CD4-positive, alpha-beta memory T cell (primary cell): ENCODE measurements at regions of chr1 and their contacts with region 1.

Region 1: GRCh38 chr1:26787706-26788514 is at the start of gene PIGV:
- DNase-seq: peak; percentile 87 to 92 (median 89)
- H3K4me3 ChIP-seq: peak within 1 kb of the TSS; percentile 87 to 88
- H3K4me3 Mint-ChIP-seq: peak within 1 kb of the TSS; percentile 98 to 100 (median 99)
- H3K27ac ChIP-seq: peak within 1 kb of the TSS; percentile 90
- H3K27ac Mint-ChIP-seq: peak within 1 kb of the TSS; percentile 99 to 100 (median 100)
- H3K4me1 ChIP-seq: peaks cover 79% of the 10 kb centered on the region
- H3K4me1 Mint-ChIP-seq: peaks cover 58 to 83% (median 72%) of the 10 kb centered on the region in 4 donors
- H3K27me3 ChIP-seq: no peaks in the 10 kb centered on the region
- H3K27me3 Mint-ChIP-seq: no peaks in the 10 kb centered on the region
- total RNA-seq, gene PIGV: 17.7 to 18.2 TPM

Region 2: GRCh38 chr1:26275580-26276431 is 512.1 kb before region 1 on chr1:
- CTCF ChIA-PET with region 1: no interaction called
- POLR2A ChIA-PET with region 1: no interaction called
- intact Hi-C with region 1: no loop called
- DNase-seq: peak; percentile 68 to 91 (median 71)
- H3K4me3 ChIP-seq: no peak overlapping the region
- H3K4me3 Mint-ChIP-seq: peak overlapping the region in 7 of 8 donors; percentile 64 to 90 (median 77)
- H3K27ac ChIP-seq: peak overlapping the region; percentile 82
- H3K27ac Mint-ChIP-seq: peak overlapping the region; percentile 94 to 100 (median 98)
- H3K4me1 ChIP-seq: peaks cover 49% of the 10 kb centered on the region
- H3K4me1 Mint-ChIP-seq: peaks cover 32 to 51% (median 42%) of the 10 kb centered on the region in 4 donors
- H3K27me3 ChIP-seq: no peaks in the 10 kb centered on the region
- H3K27me3 Mint-ChIP-seq: no peaks in the 10 kb centered on the region

Region 3: GRCh38 chr1:26602378-26602959 is 185.4 kb before region 1 on chr1:
- CTCF ChIA-PET with region 1: interaction called, 352 read pairs
- POLR2A ChIA-PET with region 1: interaction called, 104 read pairs
- intact Hi-C with region 1: loop called (anchors 1 kb)
- DNase-seq: peak; percentile 52 to 72 (median 70)
- H3K4me3 ChIP-seq: no peak overlapping the region
- H3K4me3 Mint-ChIP-seq: no peak overlapping the region
- H3K27ac ChIP-seq: no peak overlapping the region
- H3K27ac Mint-ChIP-seq: peak overlapping the region in 1 of 7 donors; percentile 35
- H3K4me1 ChIP-seq: peaks cover 10% of the 10 kb centered on the region
- H3K4me1 Mint-ChIP-seq: peaks cover 6 to 9% (median 7%) of the 10 kb centered on the region in 4 donors
- H3K27me3 ChIP-seq: no peaks in the 10 kb centered on the region
- H3K27me3 Mint-ChIP-seq: no peaks in the 10 kb centered on the region

Region 4: DNA sequence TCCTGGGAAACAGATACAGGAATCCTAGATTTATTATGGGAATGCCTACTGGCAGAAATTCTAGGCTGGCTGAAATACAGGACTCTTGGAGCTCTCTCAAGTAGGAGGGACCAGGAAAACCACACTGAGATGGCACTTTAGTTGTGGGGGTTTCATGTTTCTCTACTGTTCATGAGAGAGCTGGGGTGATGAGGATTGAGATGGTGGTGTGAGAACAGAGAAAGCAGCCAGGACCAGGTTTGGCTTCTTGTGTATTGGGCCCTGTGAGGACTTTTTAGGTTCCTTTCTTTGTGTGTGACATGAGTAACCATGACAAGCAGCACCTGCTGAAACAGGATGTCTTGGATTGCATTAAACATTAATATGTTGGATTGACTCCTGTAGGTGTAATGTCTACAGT is 87.2 kb before region 1 on chr1:
- CTCF ChIA-PET with region 1: interaction called, 51 read pairs
- POLR2A ChIA-PET with region 1: interaction called, 595 read pairs
- intact Hi-C with region 1: no loop called
- DNase-seq: no peak
- H3K4me3 ChIP-seq: peak overlapping the region in 1 of 2 donors; percentile 20
- H3K4me3 Mint-ChIP-seq: no peak overlapping the region
- H3K27ac ChIP-seq: peak overlapping the region; percentile 17
- H3K27ac Mint-ChIP-seq: peak overlapping the region in 3 of 7 donors; percentile 17 to 82 (median 72)
- H3K4me1 ChIP-seq: peaks cover 76% of the 10 kb centered on the region
- H3K4me1 Mint-ChIP-seq: peaks cover 0 to 14% (median 4%) of the 10 kb centered on the region in 4 donors
- H3K27me3 ChIP-seq: no peaks in the 10 kb centered on the region
- H3K27me3 Mint-ChIP-seq: no peaks in the 10 kb centered on the region

Region 5: GRCh38 chr1:26744075-26744959 is 43.6 kb before region 1 on chr1:
- CTCF ChIA-PET with region 1: interaction called, 35 read pairs
- POLR2A ChIA-PET with region 1: interaction called, 69 read pairs
- intact Hi-C with region 1: loop called (anchors 1 kb)
- DNase-seq: peak; percentile 81 to 93 (median 88)
- H3K4me3 ChIP-seq: peak overlapping the region in 1 of 2 donors; percentile 41
- H3K4me3 Mint-ChIP-seq: peak overlapping the region; percentile 5 to 90 (median 79)
- H3K27ac ChIP-seq: peak overlapping the region; percentile 70
- H3K27ac Mint-ChIP-seq: peak overlapping the region; percentile 90 to 98 (median 93)
- H3K4me1 ChIP-seq: peaks cover 95% of the 10 kb centered on the region
- H3K4me1 Mint-ChIP-seq: peaks cover 66 to 93% (median 79%) of the 10 kb centered on the region in 4 donors
- H3K27me3 ChIP-seq: no peaks in the 10 kb centered on the region
- H3K27me3 Mint-ChIP-seq: no peaks in the 10 kb centered on the region

Region 6: DNA sequence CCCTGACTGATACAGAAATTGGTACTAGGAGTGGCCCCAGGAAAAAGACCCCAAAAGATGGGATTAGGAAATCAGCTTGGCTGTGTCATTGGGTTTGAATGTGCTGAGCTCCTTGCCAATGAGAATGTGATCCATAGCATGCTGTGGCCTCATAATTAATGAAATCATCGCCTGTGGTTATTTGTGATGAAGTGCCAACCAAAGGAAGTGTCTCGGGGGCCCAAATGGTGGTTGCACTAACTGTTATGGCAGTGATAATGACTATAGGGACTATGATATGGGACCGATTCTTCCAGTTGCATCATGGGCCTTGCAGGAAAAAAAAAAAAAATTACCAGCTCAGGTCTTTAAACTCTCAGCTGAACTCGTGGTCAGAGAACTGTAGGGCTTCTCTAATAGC is 23.1 kb after region 1 on chr1:
- CTCF ChIA-PET with region 1: interaction called, 49 read pairs
- POLR2A ChIA-PET with region 1: interaction called, 12 read pairs
- intact Hi-C with region 1: no loop called
- DNase-seq: no peak
- H3K4me3 ChIP-seq: no peak overlapping the region
- H3K4me3 Mint-ChIP-seq: peak overlapping the region in 1 of 8 donors; percentile 39
- H3K27ac ChIP-seq: no peak overlapping the region
- H3K27ac Mint-ChIP-seq: peak overlapping the region; percentile 37 to 96 (median 80)
- H3K4me1 ChIP-seq: no peaks in the 10 kb centered on the region
- H3K4me1 Mint-ChIP-seq: peaks cover 3 to 12% (median 8%) of the 10 kb centered on the region in 4 donors
- H3K27me3 ChIP-seq: no peaks in the 10 kb centered on the region
- H3K27me3 Mint-ChIP-seq: no peaks in the 10 kb centered on the region

Region 7: DNA sequence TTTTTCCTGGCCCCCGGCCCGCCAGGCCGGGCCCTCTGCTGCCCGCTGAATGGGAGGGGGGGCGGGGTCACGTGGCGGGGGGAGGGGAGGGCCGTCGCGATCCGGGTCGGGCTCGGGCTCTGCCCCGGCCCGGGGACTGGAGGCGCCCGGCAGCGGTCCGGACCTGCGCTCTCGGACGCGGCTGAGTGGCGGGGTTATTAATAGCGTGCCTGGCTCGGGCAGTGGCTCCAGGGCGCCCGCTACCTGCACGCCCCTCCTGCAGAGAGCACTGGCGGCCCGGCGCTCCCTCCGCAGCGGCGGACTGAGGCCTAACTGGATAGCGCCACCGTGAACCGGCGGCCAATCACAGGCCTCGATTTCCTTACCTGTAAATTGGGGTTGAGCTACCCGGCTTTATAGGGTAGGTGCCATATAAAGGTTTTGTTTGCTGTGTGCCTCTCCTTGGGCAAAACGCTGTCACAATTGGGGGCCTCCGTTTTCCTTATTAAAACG is 788.0 kb after region 1 on chr1:
- CTCF ChIA-PET with region 1: no interaction called
- POLR2A ChIA-PET with region 1: no interaction called
- intact Hi-C with region 1: no loop called
- DNase-seq: no peak
- H3K4me3 ChIP-seq: no peak overlapping the region
- H3K4me3 Mint-ChIP-seq: peak overlapping the region in 4 of 8 donors; percentile 17 to 45 (median 30)
- H3K27ac ChIP-seq: no peak overlapping the region
- H3K27ac Mint-ChIP-seq: no peak overlapping the region
- H3K4me1 ChIP-seq: no peaks in the 10 kb centered on the region
- H3K4me1 Mint-ChIP-seq: peaks cover 7 to 32% (median 19%) of the 10 kb centered on the region in 4 donors
- H3K27me3 ChIP-seq: no peaks in the 10 kb centered on the region
- H3K27me3 Mint-ChIP-seq: peaks cover 0 to 4% of the 10 kb centered on the region in 2 donors